ENCODE measurements at regions of chr1 and their contacts with region 1.

Region 1: DNA sequence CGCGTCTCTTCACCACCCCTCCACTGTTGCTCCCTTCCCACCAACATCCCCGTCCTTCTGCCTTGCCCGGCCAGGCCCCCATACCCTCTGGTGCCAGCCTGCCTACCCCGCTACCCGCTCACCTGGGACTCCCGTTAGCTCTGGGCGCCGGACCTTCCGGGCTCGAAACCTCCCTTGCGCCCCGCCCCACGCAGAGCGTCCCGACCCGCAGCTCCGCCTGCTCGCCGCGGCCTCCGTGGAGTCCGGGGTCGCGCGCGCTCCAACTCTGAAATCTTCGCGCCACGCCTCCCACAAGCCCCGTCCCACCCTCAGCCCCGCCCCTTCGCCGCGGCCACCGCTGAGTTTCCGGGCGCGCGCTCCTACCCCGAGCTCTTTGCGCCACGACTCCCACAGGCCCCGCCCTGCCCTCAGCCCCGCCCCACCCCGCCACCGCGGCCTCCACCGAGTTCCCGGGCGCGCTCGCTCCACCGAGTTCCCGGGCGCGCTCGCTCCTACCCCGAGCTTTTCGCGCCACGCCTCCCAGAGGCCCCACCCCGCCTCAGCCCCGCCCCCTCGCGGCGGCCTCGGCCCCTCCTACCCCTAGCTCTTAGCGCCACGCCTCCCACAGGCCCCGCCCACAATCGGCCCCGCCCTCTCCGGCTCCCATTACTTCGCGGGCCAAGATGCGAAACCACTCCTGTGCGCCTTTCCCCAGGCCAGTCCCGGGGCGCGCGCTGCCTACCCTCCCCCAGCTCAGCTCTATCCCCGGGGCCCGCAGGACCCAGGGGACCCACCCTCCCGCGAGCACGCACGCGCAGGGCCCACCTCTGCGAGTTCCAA is at the start of gene IFT25:
- DNase-seq: peak; percentile 91 to 95
- ATAC-seq: peak; percentile 85 to 86
- H3K4me3 ChIP-seq: peak within 1 kb of the TSS; percentile 80 to 98 (median 92)
- H3K27ac ChIP-seq: peak within 1 kb of the TSS; percentile 86 to 97 (median 94)
- H3K4me1 ChIP-seq: peaks cover 8 to 19% of the 10 kb centered on the region in 2 donors
- H3K27me3 ChIP-seq: no peaks in the 10 kb centered on the region
- CTCF ChIP-seq: no peak
- POLR2A ChIP-seq: peak; percentile 37 to 64
- total RNA-seq, gene IFT25: 2.4 to 9.1 (median 2.9) TPM

Region 2: DNA sequence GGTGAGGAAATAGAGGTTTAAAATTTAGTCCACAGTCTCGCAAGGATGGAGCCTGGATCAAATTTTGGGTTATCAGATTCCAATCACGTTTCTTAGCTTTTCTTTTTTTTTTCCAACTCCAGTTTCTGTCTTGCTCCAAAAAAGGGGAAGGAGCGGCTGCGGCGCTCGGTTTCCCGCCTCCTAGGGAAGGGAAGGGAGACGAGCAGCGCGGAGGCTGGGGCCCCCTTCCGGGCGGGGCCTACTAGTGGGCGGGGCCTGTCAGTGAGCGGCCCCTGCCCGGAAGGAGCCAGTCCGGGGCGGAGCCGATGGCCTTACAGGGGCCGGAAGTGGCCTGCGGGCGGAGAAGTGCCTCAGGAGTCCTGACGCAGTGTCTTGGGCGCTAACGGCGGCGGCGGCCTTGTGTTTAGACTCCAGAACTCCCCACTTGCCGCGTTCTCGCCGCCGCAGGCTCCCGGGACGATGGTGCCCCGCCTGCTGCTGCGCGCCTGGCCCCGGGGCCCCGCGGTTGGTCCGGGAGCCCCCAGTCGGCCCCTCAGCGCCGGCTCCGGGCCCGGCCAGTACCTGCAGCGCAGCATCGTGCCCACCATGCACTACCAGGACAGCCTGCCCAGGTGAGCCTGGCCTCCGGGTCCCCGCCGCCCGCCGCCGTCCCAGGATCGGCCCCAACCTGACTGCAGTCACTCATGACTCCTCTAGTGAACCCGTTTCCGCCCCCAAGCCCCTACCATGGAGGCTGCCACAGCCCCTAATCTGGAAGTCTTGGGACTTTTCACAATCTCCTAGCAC is 749.0 kb before region 1 on chr1 and contains the start of gene CPT2:
- in situ Hi-C with region 1: no loop called
- intact Hi-C with region 1: loop called (anchors 5 kb)
- DNase-seq: peak; percentile 83 to 90
- ATAC-seq: peak; percentile 90 to 94
- H3K4me3 ChIP-seq: peak within 1 kb of the TSS; percentile 83 to 94 (median 88)
- H3K27ac ChIP-seq: peak within 1 kb of the TSS; percentile 88 to 98 (median 96)
- H3K4me1 ChIP-seq: peaks cover 27 to 30% of the 10 kb centered on the region in 2 donors
- H3K27me3 ChIP-seq: no peaks in the 10 kb centered on the region
- CTCF ChIP-seq: peak in 2 of 5 experiments; percentile 21 to 35
- POLR2A ChIP-seq: peak; percentile 91 to 98
- total RNA-seq, gene CPT2: 13.3 to 30.6 (median 26.6) TPM

Region 3: GRCh38 chr1:53860967-53861411 is 84.7 kb before region 1 on chr1:
- in situ Hi-C with region 1: no loop called
- intact Hi-C with region 1: loop called (anchors 5 kb)
- DNase-seq: no peak
- ATAC-seq: peak in 1 of 2 donors; percentile 39
- H3K4me3 ChIP-seq: no peak overlapping the region
- H3K27ac ChIP-seq: no peak overlapping the region
- H3K4me1 ChIP-seq: no peaks in the 10 kb centered on the region
- H3K27me3 ChIP-seq: no peaks in the 10 kb centered on the region
- CTCF ChIP-seq: peak; percentile 15 to 69 (median 44)
- POLR2A ChIP-seq: no peak

Region 4: GRCh38 chr1:53889304-53890298 is 56.0 kb before region 1 on chr1 and contains the start of gene YIPF1:
- in situ Hi-C with region 1: loop called (anchors 5 to 10 kb)
- intact Hi-C with region 1: loop called (anchors 1 kb)
- DNase-seq: peak; percentile 79 to 88
- ATAC-seq: peak; percentile 97 to 98
- H3K4me3 ChIP-seq: peak within 1 kb of the TSS; percentile 90 to 97 (median 95)
- H3K27ac ChIP-seq: peak within 1 kb of the TSS; percentile 76 to 86 (median 80)
- H3K4me1 ChIP-seq: peaks cover 14 to 15% of the 10 kb centered on the region in 2 donors
- H3K27me3 ChIP-seq: no peaks in the 10 kb centered on the region
- CTCF ChIP-seq: no peak
- POLR2A ChIP-seq: peak; percentile 22 to 55
- total RNA-seq, gene YIPF1: 18.8 to 34.8 (median 27.2) TPM

Region 5: DNA sequence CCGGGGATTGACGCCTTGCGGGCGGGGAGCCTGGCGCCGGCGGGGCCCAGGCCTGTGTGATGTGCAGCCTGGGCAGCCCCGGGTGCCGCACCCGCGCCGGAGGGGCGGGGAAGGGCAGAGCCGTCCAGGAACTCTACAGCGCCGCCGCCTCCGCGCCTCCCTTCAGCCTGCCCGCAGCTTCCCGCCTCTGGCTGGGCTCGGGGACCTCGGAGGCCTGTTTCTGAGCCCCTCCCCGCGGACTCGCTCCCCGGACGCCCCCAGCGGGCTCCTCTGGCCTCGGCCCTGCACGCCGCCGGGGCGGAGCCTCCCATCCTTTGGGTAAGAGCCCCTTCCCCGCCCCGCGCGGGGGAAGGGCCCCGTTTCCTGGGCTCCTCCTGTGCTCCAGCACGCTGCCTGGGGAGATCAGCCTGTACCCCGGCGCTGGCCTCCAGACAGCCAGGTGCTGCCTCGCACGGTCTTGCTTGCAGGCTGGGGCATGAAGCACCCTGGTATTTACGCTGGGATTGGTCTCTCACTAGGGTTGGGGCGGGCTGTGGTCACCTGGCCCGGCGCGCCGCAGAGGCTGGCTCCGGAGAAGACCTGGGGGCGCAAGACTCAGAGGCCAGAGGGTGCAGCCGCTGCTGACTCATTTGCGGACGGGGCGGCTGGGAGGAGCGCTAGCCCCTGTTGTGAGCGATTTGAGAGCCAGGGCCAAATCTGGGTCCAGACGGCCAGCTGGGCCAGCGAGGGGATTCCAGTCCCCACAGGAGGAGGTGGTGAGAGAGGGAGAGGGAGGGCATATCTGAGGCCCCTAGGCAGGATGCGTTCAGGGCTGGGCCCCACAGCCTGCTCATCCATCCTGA is 596.7 kb after region 1 on chr1:
- in situ Hi-C with region 1: no loop called
- intact Hi-C with region 1: loop called (anchors 10 kb)
- DNase-seq: peak in 1 of 2 donors; percentile 19
- ATAC-seq: peak; percentile 50 to 60
- H3K4me3 ChIP-seq: peak overlapping the region; percentile 45 to 80 (median 62)
- H3K27ac ChIP-seq: peak overlapping the region in 3 of 4 donors; percentile 37 to 69 (median 46)
- H3K4me1 ChIP-seq: peaks cover 9 to 11% of the 10 kb centered on the region in 2 donors
- H3K27me3 ChIP-seq: no peaks in the 10 kb centered on the region
- CTCF ChIP-seq: peak in 1 of 5 experiments; percentile 14
- POLR2A ChIP-seq: no peak

Measured in gastrocnemius medialis (tissue), 4 donors.